ENCODE measurements at regions of chr2 and their contacts with region 1.

Region 1: GRCh38 chr2:231452799-231453508 is 11.3 kb downstream of the NCL start:
- DNase-seq: peak in 1 of 10 donors; percentile 8
- H3K4me3 ChIP-seq: no peak overlapping the region
- H3K27ac ChIP-seq: peak overlapping the region in 30 of 59 donors; percentile 4 to 74 (median 41)
- H3K27me3 ChIP-seq: no peaks in the 10 kb centered on the region
- CTCF ChIP-seq: no peak

Region 2: DNA sequence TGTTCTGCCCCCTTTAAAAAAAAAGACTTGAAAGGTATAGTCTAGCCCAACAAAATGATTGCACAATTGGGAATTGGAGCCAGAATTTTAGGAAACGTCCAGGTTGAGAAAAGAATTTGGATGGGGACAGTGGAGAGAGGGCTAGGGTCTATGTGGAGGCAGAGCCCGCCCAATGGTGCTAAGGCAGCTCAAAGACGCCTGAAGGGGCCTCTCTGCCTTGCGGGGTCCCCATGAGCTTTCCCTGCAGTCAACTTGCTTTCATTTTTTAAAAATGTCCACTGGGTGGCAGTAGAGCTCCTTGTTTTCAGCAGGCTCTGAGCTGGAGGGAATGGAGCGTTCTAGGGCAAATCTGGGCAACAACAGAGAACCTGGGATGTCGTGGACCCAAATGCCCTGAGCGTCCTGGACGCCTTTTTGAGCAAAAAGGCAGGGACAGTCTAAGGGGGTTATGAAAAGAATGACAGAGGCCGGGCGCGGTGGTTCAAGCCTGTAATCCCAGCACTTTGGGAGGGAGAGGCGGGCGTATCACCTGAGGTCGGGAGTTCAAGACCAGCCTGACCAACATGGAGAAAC is 628.5 kb before region 1 on chr2:
- intact Hi-C with region 1: loop called in 1 of 2 experiments (anchors 5 kb)
- DNase-seq: peak in 7 of 10 donors; percentile 30 to 59 (median 51)
- H3K4me3 ChIP-seq: peak overlapping the region in 37 of 59 donors; percentile 6 to 57 (median 32)
- H3K27ac ChIP-seq: peak overlapping the region in 1 of 59 donors; percentile 31
- H3K27me3 ChIP-seq: peaks cover 0 to 25% (median 12%) of the 10 kb centered on the region in 45 donors
- CTCF ChIP-seq: peak; percentile 64 to 88 (median 79)

Region 3: DNA sequence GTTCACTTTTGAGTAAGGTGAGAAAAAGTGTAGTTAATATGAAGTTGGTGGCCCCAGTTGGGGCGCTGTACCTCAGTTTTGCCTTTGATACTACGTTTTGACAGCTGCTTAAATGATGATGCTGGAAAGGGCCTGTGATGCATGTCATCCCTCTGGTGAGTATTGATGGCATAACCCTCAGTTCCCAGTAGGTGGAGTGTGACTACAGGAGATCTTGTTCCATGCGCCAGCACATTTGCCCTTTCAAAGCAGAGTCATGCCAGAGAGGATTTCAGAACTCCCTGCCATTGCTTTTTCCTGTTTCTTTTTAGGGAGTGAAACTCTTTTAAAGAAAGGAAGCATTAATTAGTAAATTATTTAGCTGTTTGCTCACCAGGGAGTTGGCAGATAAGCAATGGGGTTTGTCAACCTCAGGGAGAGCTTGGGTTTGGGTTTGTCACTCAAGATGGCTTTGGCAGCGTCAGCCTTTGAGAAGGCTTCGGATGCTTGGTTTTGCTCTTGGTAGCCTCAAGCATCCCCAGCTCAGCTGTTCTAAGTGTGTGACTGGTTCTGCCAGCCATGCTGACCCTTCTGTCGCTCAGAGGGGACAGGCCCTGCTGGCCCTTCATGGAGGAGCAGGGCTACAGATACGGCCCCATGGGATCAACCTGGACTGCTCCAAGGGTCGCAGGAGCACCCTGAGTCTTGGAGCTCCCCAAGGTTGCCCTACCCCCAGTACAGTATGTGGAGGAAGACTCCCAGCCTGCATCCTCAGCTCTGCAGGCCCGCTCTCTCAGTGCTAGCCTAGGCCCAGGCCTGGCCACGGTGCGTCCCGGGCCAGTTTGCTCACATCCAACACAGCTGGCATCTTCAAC is 225.4 kb before region 1 on chr2:
- intact Hi-C with region 1: loop called in 1 of 2 experiments (anchors 2 kb)
- DNase-seq: peak in 9 of 10 donors; percentile 55 to 83 (median 61)
- H3K4me3 ChIP-seq: no peak overlapping the region
- H3K27ac ChIP-seq: peak overlapping the region in 46 of 59 donors; percentile 0 to 81 (median 60)
- H3K27me3 ChIP-seq: no peaks in the 10 kb centered on the region
- CTCF ChIP-seq: peak; percentile 61 to 98 (median 88)

Region 4: GRCh38 chr2:231411831-231412617 is 40.9 kb before region 1 on chr2:
- intact Hi-C with region 1: loop called in 1 of 2 experiments (anchors 1 kb)
- DNase-seq: peak; percentile 78 to 93 (median 86)
- H3K4me3 ChIP-seq: peak overlapping the region; percentile 50 to 89 (median 71)
- H3K27ac ChIP-seq: peak overlapping the region in 37 of 59 donors; percentile 2 to 84 (median 51)
- H3K27me3 ChIP-seq: no peaks in the 10 kb centered on the region
- CTCF ChIP-seq: peak; percentile 33 to 96 (median 88)